ENCODE measurements at regions of chr9 and their contacts with region 1.

Region 1: DNA sequence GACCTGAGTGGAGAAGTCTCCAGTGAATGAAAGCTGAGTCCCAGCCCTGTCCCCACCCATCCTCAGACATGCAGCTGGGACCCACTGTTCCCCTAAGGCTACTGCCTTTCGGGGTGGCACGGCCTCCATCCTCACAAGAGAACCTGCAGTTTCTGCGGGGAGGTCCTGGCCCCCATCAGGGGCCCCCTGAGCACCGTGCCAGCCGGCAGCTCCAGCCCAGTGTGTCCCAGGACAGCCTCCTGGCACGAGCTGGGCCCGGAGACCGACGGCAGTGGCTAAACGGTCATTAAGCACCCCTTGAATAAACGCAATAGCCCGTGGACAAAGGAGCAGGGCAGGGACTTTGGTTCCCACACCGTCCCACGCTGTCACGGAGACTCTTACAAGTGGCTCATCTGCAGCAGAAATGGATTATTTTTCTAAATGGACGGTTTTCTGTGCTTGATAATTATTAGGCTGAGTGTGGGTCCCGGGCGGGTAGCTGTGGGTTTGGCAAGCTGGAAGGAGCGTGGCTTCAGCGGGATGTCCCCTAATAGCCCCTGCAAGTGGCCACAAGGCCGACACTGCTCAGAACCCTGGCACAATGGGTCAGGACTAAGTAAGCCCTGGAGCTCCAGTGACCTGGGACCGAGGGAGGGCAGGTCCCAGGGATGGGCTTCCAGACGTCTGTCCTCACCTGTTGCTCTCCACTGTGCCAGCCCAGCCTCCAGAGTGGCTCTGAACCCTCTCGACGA is 17.4 kb downstream of the FAM78A start:
- DNase-seq: no peak
- ATAC-seq: no peak
- H3K4me3 ChIP-seq: no peak overlapping the region
- H3K27ac ChIP-seq: no peak overlapping the region
- H3K4me1 ChIP-seq: no peaks in the 10 kb centered on the region
- H3K27me3 ChIP-seq: no peaks in the 10 kb centered on the region
- CTCF ChIP-seq: no peak

Region 2: DNA sequence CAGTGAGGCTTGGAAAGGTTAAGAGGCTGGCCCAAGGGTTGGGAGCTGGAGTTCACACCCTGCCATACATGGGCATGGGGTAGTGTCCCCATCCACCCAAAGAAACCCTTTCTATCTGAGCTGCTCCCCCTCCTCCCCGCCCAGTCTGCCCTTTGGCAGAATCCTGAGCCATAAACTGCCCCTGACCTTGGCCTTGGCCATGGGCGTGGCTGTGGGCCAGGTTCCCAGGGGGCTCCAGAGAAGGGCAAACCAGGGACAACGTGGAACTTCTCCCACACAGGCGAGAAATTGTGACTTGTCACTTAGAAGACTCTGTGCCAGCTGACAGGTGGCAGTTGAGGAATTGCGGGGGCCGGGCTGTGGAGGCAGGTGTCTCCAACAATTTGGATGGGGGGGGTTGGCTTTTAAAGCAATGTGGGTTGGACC is 12.7 kb after region 1 on chr9:
- CTCF ChIA-PET with region 1: interaction called, 10 read pairs
- POLR2A ChIA-PET with region 1: no interaction called
- in situ Hi-C with region 1: no loop called
- intact Hi-C with region 1: no loop called
- DNase-seq: no peak
- ATAC-seq: no peak
- H3K4me3 ChIP-seq: no peak overlapping the region
- H3K27ac ChIP-seq: no peak overlapping the region
- H3K4me1 ChIP-seq: no peaks in the 10 kb centered on the region
- H3K27me3 ChIP-seq: no peaks in the 10 kb centered on the region
- CTCF ChIP-seq: no peak

Measured in Panc1 (cell line).